Posterior cingulate gyrus (tissue), 11 donors: ENCODE measurements at regions of chr2 and their contacts with region 1.

Region 1: GRCh38 chr2:42494355-42495233 is 812 bp upstream of the KCNG3 start:
- DNase-seq: peak in 9 of 10 donors; percentile 34 to 94 (median 75)

Region 2: GRCh38 chr2:41741951-41742595 is 752.5 kb before region 1 on chr2:
- intact Hi-C with region 1: no loop called
- DNase-seq: no peak

Region 3: DNA sequence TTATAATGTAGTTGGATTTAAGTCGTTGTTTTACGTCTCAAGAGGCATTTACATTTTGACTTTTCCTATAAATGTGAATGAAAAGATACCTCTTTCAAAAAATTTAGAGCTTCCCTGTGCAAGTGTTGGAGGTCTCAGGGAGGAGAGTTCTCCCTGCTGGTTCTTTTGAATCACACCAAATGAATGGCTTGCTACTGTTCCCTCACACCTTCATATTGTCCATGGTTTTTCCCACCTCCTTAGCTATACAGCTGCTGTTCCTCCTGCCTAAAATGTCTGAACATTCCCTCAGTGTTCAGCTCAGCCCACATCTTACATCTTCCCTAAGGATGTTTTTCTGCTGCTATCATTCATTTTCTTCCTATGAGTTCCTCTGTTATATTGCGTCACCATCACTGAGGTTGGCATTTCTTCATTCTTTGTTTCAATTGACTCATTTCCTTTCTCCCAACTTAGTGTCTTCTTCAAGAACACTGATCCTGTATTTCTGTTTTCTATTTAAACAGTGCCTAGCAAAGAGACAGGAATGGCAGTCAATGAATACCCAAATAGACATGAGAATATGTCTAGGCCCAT is 179.6 kb before region 1 on chr2:
- intact Hi-C with region 1: no loop called
- DNase-seq: no peak

Region 4: GRCh38 chr2:42663106-42663780 is 168.6 kb after region 1 on chr2:
- intact Hi-C with region 1: loop called (anchors 1 kb)
- DNase-seq: peak; percentile 25 to 95 (median 64)